Activated CD4-positive, alpha-beta T cell treated with anti-CD3 and anti-CD28 coated beads, Interleukin-2, amount 10 ng/mL, durations not matched to agents 7 days and 5 days (primary cell): ENCODE measurements at regions of chr6 and their contacts with region 1.

Region 1: GRCh38 chr6:137866914-137867684 is at the start of gene TNFAIP3:
- DNase-seq: peak; percentile 95
- H3K4me3 Mint-ChIP-seq: peak within 1 kb of the TSS; percentile 91
- H3K27ac Mint-ChIP-seq: peak within 1 kb of the TSS; percentile 98
- H3K4me1 Mint-ChIP-seq: peaks cover 57% of the 10 kb centered on the region
- H3K27me3 Mint-ChIP-seq: no peaks in the 10 kb centered on the region
- total RNA-seq, gene TNFAIP3: 41.8 to 43.9 TPM

Region 2: DNA sequence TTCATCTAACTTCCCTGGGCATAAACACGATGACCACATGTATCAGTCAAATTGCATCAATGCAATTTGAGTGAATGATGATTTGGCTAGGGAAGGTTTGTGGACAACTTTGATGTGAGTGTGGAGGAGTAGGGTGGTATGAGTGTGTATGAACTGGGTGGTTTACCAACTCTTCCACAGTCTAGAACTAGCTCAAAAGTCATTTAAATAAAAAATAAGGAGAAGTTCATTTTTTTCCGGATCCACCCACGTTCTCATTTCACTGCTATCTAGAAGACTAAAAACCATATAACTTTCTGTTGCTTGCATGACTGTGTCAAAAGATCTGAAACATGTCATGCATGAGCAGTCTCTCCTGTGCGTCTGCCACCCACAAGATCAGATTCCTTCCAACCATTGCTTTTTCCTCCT is 921.4 kb before region 1 on chr6:
- CTCF ChIA-PET with region 1: no interaction called
- POLR2A ChIA-PET with region 1: no interaction called
- DNase-seq: no peak
- H3K4me3 Mint-ChIP-seq: no peak overlapping the region
- H3K27ac Mint-ChIP-seq: no peak overlapping the region
- H3K4me1 Mint-ChIP-seq: no peaks in the 10 kb centered on the region
- H3K27me3 Mint-ChIP-seq: peaks cover 3% of the 10 kb centered on the region

Region 3: GRCh38 chr6:137717074-137718073 is 149.7 kb before region 1 on chr6:
- CTCF ChIA-PET with region 1: interaction called, 68 read pairs
- POLR2A ChIA-PET with region 1: no interaction called
- DNase-seq: peak; percentile 87
- H3K4me3 Mint-ChIP-seq: no peak overlapping the region
- H3K27ac Mint-ChIP-seq: peak overlapping the region; percentile 89
- H3K4me1 Mint-ChIP-seq: peaks cover 52% of the 10 kb centered on the region
- H3K27me3 Mint-ChIP-seq: no peaks in the 10 kb centered on the region

Region 4: DNA sequence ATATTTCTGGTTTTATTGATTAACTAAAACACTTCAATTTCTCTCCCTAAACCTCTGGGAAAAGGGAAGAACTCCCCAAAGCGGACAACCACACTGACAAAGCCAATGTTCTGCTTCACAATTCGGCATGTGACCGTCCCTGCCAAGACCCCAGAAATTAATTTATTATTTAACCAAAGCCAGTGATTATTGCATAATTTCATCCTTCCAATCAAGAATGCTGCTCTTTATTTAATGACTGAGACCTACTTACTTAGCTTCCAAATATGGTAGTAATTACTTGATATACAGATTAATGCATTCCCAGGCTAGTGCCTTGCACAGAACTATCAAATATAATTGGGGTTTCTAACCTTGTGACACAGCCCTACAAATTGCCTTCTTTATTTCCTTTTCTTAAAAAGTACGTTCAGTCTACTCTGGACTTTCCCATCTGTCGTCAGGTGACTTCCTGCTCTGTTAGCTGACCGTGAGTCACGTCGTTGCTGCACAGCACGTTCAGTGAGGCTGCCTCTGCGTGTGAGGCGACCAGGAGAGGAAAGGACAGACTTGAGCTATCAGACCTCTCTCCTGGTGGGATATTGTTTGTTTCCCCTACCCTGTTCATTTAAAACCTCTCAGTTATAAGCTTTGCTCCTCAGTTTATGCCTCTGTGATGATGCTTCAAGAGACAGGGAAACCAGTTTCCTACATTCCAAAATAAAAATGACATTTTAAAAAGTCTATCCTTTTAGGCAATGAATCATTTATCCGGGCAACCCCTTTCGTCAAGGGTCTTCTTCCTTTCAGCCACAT is 55.8 kb before region 1 on chr6:
- CTCF ChIA-PET with region 1: interaction called, 14 read pairs
- POLR2A ChIA-PET with region 1: interaction called, 4 read pairs
- DNase-seq: peak; percentile 72
- H3K4me3 Mint-ChIP-seq: peak overlapping the region; percentile 20
- H3K27ac Mint-ChIP-seq: peak overlapping the region; percentile 85
- H3K4me1 Mint-ChIP-seq: peaks cover 37% of the 10 kb centered on the region
- H3K27me3 Mint-ChIP-seq: no peaks in the 10 kb centered on the region

Region 5: GRCh38 chr6:137927777-137928218 is 60.7 kb after region 1 on chr6:
- CTCF ChIA-PET with region 1: interaction called, 10 read pairs
- POLR2A ChIA-PET with region 1: no interaction called
- DNase-seq: peak; percentile 83
- H3K4me3 Mint-ChIP-seq: peak overlapping the region; percentile 48
- H3K27ac Mint-ChIP-seq: peak overlapping the region; percentile 86
- H3K4me1 Mint-ChIP-seq: peaks cover 41% of the 10 kb centered on the region
- H3K27me3 Mint-ChIP-seq: no peaks in the 10 kb centered on the region

Region 6: GRCh38 chr6:137975188-137975940 is 108.3 kb after region 1 on chr6:
- CTCF ChIA-PET with region 1: interaction called, 22 read pairs
- POLR2A ChIA-PET with region 1: interaction called, 4 read pairs
- DNase-seq: peak; percentile 52
- H3K4me3 Mint-ChIP-seq: peak overlapping the region; percentile 68
- H3K27ac Mint-ChIP-seq: peak overlapping the region; percentile 92
- H3K4me1 Mint-ChIP-seq: peaks cover 48% of the 10 kb centered on the region
- H3K27me3 Mint-ChIP-seq: no peaks in the 10 kb centered on the region

Region 7: GRCh38 chr6:138084904-138085838 is 218.1 kb after region 1 on chr6:
- CTCF ChIA-PET with region 1: no interaction called
- POLR2A ChIA-PET with region 1: no interaction called
- DNase-seq: no peak
- H3K4me3 Mint-ChIP-seq: no peak overlapping the region
- H3K27ac Mint-ChIP-seq: no peak overlapping the region
- H3K4me1 Mint-ChIP-seq: no peaks in the 10 kb centered on the region
- H3K27me3 Mint-ChIP-seq: peaks cover 27% of the 10 kb centered on the region